ENCODE measurements at regions of chr1 and their contacts with region 1.

Region 1: DNA sequence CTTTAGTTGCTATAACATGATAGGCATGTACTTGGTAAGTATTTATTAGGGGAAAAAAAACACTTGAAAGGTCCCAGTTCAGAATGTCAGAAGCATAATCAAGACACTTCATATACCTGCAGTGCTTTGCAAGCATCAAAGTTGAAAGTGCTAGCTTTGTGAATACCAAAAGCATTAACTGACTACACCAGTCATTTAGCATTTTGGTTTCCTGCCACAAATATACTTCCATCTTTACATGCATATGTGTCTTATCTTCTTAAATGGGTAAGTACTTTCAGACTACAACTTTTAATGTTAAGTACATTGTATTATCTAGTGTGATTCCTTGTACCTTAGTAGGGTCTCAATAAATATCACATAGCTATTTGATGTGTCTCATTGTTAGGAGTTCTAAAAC is 43.7 kb downstream of the AKT3 start:
- DNase-seq: peak in 1 of 9 experiments; percentile 9
- ATAC-seq: no peak
- H3K4me3 ChIP-seq: no peak overlapping the region
- H3K4me3 Mint-ChIP-seq: no peak overlapping the region
- H3K27ac ChIP-seq: no peak overlapping the region
- H3K27ac Mint-ChIP-seq: peak overlapping the region; percentile 46
- H3K4me1 ChIP-seq: peaks cover 34% of the 10 kb centered on the region
- H3K4me1 Mint-ChIP-seq: peaks cover 75% of the 10 kb centered on the region
- H3K27me3 ChIP-seq: no peaks in the 10 kb centered on the region
- H3K27me3 Mint-ChIP-seq: no peaks in the 10 kb centered on the region
- CTCF ChIP-seq: no peak

Region 2: DNA sequence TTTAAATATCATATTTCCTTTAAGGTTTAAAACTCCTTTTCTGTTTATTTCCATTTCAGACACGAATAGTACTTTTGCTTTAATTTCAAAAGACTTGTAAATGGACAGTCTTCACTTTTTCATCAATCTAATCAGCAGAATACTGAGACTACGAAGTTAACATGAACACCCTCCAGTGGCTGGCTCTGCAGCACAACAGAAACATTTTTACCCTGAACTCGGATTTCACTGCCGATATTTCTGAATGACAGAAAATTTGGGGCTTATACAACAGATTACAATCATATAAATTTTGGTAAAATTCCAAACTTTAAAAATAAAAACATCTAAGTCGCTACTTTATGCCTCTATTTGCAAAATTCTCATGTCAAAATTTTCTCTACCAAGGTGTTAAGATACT is 42.5 kb before region 1 on chr1:
- CTCF ChIA-PET with region 1: no interaction called
- POLR2A ChIA-PET with region 1: no interaction called
- intact Hi-C with region 1: loop called in 1 of 2 experiments (anchors 5 kb)
- DNase-seq: no peak
- ATAC-seq: no peak
- H3K4me3 ChIP-seq: no peak overlapping the region
- H3K4me3 Mint-ChIP-seq: no peak overlapping the region
- H3K27ac ChIP-seq: no peak overlapping the region
- H3K27ac Mint-ChIP-seq: no peak overlapping the region
- H3K4me1 ChIP-seq: peaks cover 4% of the 10 kb centered on the region
- H3K4me1 Mint-ChIP-seq: peaks cover 45% of the 10 kb centered on the region
- H3K27me3 ChIP-seq: no peaks in the 10 kb centered on the region
- H3K27me3 Mint-ChIP-seq: no peaks in the 10 kb centered on the region
- CTCF ChIP-seq: no peak

Measured in CD8-positive, alpha-beta T cell (primary cell).